IMR-90 (cell line): ENCODE measurements at regions of chr12 and their contacts with region 1.

Region 1: GRCh38 chr12:1282670-1283335 is 291.8 kb downstream of the ERC1 start:
- DNase-seq: peak; percentile 31
- ATAC-seq: peak; percentile 44
- H3K4me3 ChIP-seq: no peak overlapping the region
- H3K27ac ChIP-seq: no peak overlapping the region
- H3K4me1 ChIP-seq: peaks cover 4% of the 10 kb centered on the region
- H3K27me3 ChIP-seq: no peaks in the 10 kb centered on the region
- CTCF ChIP-seq: no peak
- POLR2A ChIP-seq: no peak
- RAD21 ChIP-seq: no peak

Region 2: GRCh38 chr12:1318327-1319031 is 35.7 kb after region 1 on chr12:
- CTCF ChIA-PET with region 1: no interaction called
- POLR2A ChIA-PET with region 1: no interaction called
- dilution Hi-C with region 1: no loop called
- in situ Hi-C with region 1: no loop called
- intact Hi-C with region 1: loop called (anchors 5 kb)
- DNase-seq: peak; percentile 31
- ATAC-seq: peak; percentile 68
- H3K4me3 ChIP-seq: no peak overlapping the region
- H3K27ac ChIP-seq: peak overlapping the region; percentile 6; the same call in 1 of the 2 replicates
- H3K4me1 ChIP-seq: peaks cover 4% of the 10 kb centered on the region
- H3K27me3 ChIP-seq: no peaks in the 10 kb centered on the region
- CTCF ChIP-seq: no peak
- POLR2A ChIP-seq: no peak
- RAD21 ChIP-seq: no peak

Region 3: DNA sequence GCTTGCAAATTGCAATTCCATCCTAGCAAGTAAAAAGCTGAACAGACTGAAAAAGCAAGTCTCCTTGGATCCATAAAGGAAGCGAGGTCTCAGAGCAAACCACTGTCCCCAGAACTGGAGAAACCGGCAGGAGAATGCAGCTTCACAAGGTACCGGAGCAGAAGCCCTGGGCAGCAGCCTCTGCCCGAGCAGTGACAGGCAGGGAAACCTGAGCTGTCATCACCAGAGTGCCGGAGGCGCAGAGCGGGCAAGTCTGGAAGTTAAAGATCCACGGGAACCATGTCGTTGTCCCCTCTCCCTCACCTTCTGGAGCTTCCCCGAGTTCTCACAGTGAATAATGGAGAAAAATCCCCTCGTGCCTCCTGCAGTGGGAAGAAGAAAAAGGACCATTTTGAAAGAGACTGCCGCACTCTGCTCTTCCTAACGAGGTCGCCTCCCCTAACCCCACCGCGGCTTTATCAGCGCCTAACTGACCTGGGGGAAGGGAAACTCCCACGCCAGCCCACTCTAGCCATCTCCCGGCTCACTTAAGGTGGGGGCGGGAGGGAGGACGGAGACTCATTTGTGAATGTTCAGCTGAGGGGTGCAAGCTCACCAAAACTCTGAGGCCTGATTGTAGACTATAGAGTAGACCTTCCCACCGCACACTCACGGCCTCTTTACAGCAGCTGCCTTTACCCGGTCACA is 283.8 kb after region 1 on chr12:
- CTCF ChIA-PET with region 1: no interaction called
- POLR2A ChIA-PET with region 1: no interaction called
- dilution Hi-C with region 1: no loop called
- in situ Hi-C with region 1: no loop called
- intact Hi-C with region 1: no loop called
- DNase-seq: no peak
- ATAC-seq: no peak
- H3K4me3 ChIP-seq: no peak overlapping the region
- H3K27ac ChIP-seq: no peak overlapping the region
- H3K4me1 ChIP-seq: peaks cover 8% of the 10 kb centered on the region
- H3K27me3 ChIP-seq: no peaks in the 10 kb centered on the region
- CTCF ChIP-seq: no peak
- POLR2A ChIP-seq: no peak
- RAD21 ChIP-seq: no peak

Region 4: GRCh38 chr12:1576410-1577241 is 293.8 kb after region 1 on chr12:
- CTCF ChIA-PET with region 1: no interaction called
- POLR2A ChIA-PET with region 1: no interaction called
- dilution Hi-C with region 1: no loop called
- in situ Hi-C with region 1: no loop called
- intact Hi-C with region 1: loop called (anchors 2 kb)
- DNase-seq: peak; percentile 85
- ATAC-seq: peak; percentile 68
- H3K4me3 ChIP-seq: peak overlapping the region; percentile 5; the same call in 1 of the 2 replicates
- H3K27ac ChIP-seq: peak overlapping the region; percentile 78
- H3K4me1 ChIP-seq: peaks cover 30% of the 10 kb centered on the region
- H3K27me3 ChIP-seq: no peaks in the 10 kb centered on the region
- CTCF ChIP-seq: no peak
- POLR2A ChIP-seq: no peak
- RAD21 ChIP-seq: peak; percentile 39